Dendritic cell treated with granulocyte-macrophage colony-stimulating factor and Interleukin-4, amounts not matched to agents 40 ng/mL and 50 ng/mL, for 4 days (primary cell): ENCODE measurements at regions of chr13 and their contacts with region 1.

Region 1: GRCh38 chr13:77751513-77752456 is 54.3 kb downstream of the SLAIN1 start:
- H3K4me3 Mint-ChIP-seq: no peak overlapping the region
- H3K27ac Mint-ChIP-seq: no peak overlapping the region
- H3K4me1 Mint-ChIP-seq: no peaks in the 10 kb centered on the region
- H3K27me3 Mint-ChIP-seq: no peaks in the 10 kb centered on the region

Region 2: DNA sequence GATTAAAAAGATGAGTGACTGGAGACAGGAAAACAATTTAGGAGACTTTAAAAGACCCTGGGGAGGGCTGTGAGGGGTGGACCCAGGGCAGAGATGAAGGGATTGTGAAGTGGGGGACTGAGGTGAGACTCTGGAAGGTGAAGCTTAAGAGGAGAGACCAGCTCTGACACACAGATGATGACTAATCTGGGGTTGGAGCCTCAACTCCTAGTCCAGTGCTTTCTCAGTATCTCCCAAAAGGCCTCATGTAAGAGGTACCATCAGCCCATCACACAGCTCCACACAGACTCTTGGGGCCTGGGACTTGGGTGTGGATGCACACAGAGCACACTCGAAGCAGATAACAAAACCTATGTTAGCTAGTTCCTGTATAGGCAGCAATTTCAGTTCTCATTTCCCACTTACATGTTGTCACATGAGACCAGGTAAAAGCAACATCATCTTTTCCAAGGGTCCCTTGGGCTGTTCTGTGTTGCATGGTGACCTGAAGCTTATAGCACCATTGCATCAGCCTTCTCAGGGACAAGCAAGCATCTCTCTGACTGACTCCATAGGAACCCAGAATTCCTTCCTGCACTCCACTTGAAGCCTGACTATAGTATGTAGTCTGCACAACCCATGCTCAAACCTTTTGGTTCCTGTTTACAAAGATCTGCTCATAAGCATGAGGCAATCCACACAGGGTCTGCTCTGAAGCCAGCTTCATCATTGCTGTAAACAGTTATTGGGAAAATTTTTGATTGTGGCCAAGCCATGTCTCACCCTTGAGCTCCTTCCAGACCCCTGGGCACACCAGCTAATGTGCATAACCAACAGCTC is 336.3 kb before region 1 on chr13:
- intact Hi-C with region 1: no loop called
- H3K4me3 Mint-ChIP-seq: no peak overlapping the region
- H3K27ac Mint-ChIP-seq: peak overlapping the region; percentile 35
- H3K4me1 Mint-ChIP-seq: peaks cover 10% of the 10 kb centered on the region
- H3K27me3 Mint-ChIP-seq: peaks cover 2% of the 10 kb centered on the region

Region 3: DNA sequence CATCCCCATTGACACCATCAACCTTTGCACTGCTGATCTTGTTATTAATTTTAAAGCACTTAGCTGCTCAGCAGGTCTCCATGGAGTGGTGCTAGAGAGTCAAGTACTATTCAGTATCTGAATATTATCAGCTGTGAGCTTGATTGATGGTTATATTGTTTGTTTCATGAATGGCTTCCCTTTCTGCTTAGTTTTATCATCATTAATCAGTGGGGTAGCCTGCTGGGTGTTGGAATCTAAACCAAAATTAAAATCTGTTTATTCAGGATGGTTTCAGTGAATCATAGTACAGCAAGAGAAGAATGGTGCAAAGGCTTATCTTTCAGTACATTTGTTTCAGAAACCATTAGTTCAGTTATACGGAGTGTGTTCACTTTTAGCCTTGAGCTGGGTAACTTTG is 258.8 kb before region 1 on chr13:
- intact Hi-C with region 1: loop called (anchors 10 kb)
- H3K4me3 Mint-ChIP-seq: no peak overlapping the region
- H3K27ac Mint-ChIP-seq: no peak overlapping the region
- H3K4me1 Mint-ChIP-seq: no peaks in the 10 kb centered on the region
- H3K27me3 Mint-ChIP-seq: no peaks in the 10 kb centered on the region

Region 4: GRCh38 chr13:77595166-77595810 is 156.5 kb before region 1 on chr13:
- intact Hi-C with region 1: loop called (anchors 1 kb)
- H3K4me3 Mint-ChIP-seq: no peak overlapping the region
- H3K27ac Mint-ChIP-seq: no peak overlapping the region
- H3K4me1 Mint-ChIP-seq: peaks cover 5% of the 10 kb centered on the region
- H3K27me3 Mint-ChIP-seq: no peaks in the 10 kb centered on the region

Region 5: GRCh38 chr13:77820431-77821149 is 68.8 kb after region 1 on chr13:
- intact Hi-C with region 1: no loop called
- H3K4me3 Mint-ChIP-seq: no peak overlapping the region
- H3K27ac Mint-ChIP-seq: no peak overlapping the region
- H3K4me1 Mint-ChIP-seq: peaks cover 12% of the 10 kb centered on the region
- H3K27me3 Mint-ChIP-seq: no peaks in the 10 kb centered on the region

Region 6: DNA sequence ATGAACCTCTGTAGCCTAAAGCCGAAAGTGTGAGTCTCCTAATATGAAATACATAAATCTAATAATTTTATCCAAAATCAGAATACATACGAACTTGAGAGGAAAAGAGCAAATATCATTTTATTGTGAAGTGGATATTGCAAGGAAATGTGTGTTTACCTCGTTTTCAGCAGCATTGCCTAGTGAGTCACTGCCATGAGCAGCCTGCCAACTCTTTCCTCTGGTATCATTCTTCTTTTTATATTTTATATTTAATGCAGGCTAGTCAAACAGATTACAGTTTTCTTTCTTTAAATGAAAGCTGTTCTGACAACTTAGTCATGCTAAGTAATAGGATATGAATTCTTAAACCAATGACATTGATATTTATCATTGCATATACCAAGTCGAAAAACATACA is 122.6 kb after region 1 on chr13:
- intact Hi-C with region 1: no loop called
- H3K4me3 Mint-ChIP-seq: no peak overlapping the region
- H3K27ac Mint-ChIP-seq: no peak overlapping the region
- H3K4me1 Mint-ChIP-seq: peaks cover 10% of the 10 kb centered on the region
- H3K27me3 Mint-ChIP-seq: peaks cover 3% of the 10 kb centered on the region